ENCODE measurements at regions of chr16 and their contacts with region 1.

Region 1: GRCh38 chr16:72179204-72179970 is 7.4 kb upstream of the PMFBP1 start:
- DNase-seq: no peak
- ATAC-seq: no peak
- H3K4me3 Mint-ChIP-seq: no peak overlapping the region
- H3K27ac Mint-ChIP-seq: no peak overlapping the region
- H3K4me1 Mint-ChIP-seq: peaks cover 20% of the 10 kb centered on the region
- H3K27me3 Mint-ChIP-seq: peaks cover 11% of the 10 kb centered on the region; the same call in 1 of the 2 replicates
- CTCF ChIP-seq: no peak

Region 2: GRCh38 chr16:72124761-72125634 is 54.4 kb before region 1 on chr16:
- CTCF ChIA-PET with region 1: interaction called, 13 read pairs
- POLR2A ChIA-PET with region 1: no interaction called
- DNase-seq: peak; percentile 80
- ATAC-seq: peak; percentile 90
- H3K4me3 Mint-ChIP-seq: no peak overlapping the region
- H3K27ac Mint-ChIP-seq: 0 out of 2 replicates have a peak overlapping the region, but pooled peaks have one; percentile 8
- H3K4me1 Mint-ChIP-seq: peaks cover 19% of the 10 kb centered on the region
- H3K27me3 Mint-ChIP-seq: no peaks in the 10 kb centered on the region; the same call in 1 of the 2 replicates
- CTCF ChIP-seq: peak; percentile 80

Region 3: DNA sequence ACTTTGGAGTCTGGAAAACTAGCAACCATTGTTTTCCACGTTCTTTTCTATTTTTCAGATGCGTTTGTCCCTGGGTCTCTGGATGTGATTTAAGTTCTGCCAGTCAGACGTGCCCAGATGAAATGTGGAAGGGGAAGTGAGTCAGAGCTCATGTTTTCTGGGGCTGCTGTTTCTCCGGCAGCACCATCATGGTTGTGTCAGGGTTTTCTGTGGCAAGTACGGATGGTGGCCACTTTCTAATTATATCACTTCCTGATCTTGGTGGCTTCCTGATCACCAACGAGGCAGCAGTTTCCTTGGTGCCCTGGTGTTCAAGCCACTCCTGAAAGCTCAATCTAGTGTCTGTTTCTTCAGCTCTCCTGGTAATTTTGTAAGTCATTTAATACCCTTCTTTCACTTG is 24.0 kb after region 1 on chr16:
- CTCF ChIA-PET with region 1: no interaction called
- POLR2A ChIA-PET with region 1: no interaction called
- DNase-seq: no peak
- ATAC-seq: no peak
- H3K4me3 Mint-ChIP-seq: no peak overlapping the region
- H3K27ac Mint-ChIP-seq: no peak overlapping the region
- H3K4me1 Mint-ChIP-seq: peaks cover 28% of the 10 kb centered on the region
- H3K27me3 Mint-ChIP-seq: no peaks in the 10 kb centered on the region
- CTCF ChIP-seq: no peak

Measured in WTC11 (cell line).